ENCODE measurements at regions of chr2 and their contacts with region 1.

Region 1: GRCh38 chr2:37623971-37624900 is 47.2 kb downstream of the CDC42EP3 start:
- DNase-seq: no peak
- ATAC-seq: peak; percentile 70
- H3K4me3 ChIP-seq: no peak overlapping the region
- H3K4me3 Mint-ChIP-seq: peak overlapping the region in 9 of 10 donors; percentile 7 to 66 (median 51)
- H3K27ac ChIP-seq: no peak overlapping the region
- H3K27ac Mint-ChIP-seq: peak overlapping the region; percentile 38 to 92 (median 83)
- H3K4me1 ChIP-seq: peaks cover 30 to 56% of the 10 kb centered on the region in 2 donors
- H3K4me1 Mint-ChIP-seq: peaks cover 40 to 63% (median 45%) of the 10 kb centered on the region in 7 donors
- H3K27me3 ChIP-seq: no peaks in the 10 kb centered on the region
- H3K27me3 Mint-ChIP-seq: peaks cover 0 to 3% (median 0%) of the 10 kb centered on the region in 5 donors

Region 2: GRCh38 chr2:37635504-37636380 is 11.5 kb after region 1 on chr2:
- CTCF ChIA-PET with region 1: interaction called, 3 read pairs
- POLR2A ChIA-PET with region 1: interaction called, 4 read pairs
- intact Hi-C with region 1: loop called (anchors 1 kb)
- DNase-seq: peak; percentile 20 to 77 (median 39)
- ATAC-seq: peak; percentile 87
- H3K4me3 ChIP-seq: no peak overlapping the region
- H3K4me3 Mint-ChIP-seq: peak overlapping the region in 8 of 10 donors; percentile 13 to 49 (median 40)
- H3K27ac ChIP-seq: peak overlapping the region; percentile 41
- H3K27ac Mint-ChIP-seq: peak overlapping the region; percentile 5 to 84 (median 80)
- H3K4me1 ChIP-seq: peaks cover 24 to 58% of the 10 kb centered on the region in 2 donors
- H3K4me1 Mint-ChIP-seq: peaks cover 31 to 70% (median 36%) of the 10 kb centered on the region in 7 donors
- H3K27me3 ChIP-seq: no peaks in the 10 kb centered on the region
- H3K27me3 Mint-ChIP-seq: peaks cover 0 to 13% (median 0%) of the 10 kb centered on the region in 5 donors

Region 3: DNA sequence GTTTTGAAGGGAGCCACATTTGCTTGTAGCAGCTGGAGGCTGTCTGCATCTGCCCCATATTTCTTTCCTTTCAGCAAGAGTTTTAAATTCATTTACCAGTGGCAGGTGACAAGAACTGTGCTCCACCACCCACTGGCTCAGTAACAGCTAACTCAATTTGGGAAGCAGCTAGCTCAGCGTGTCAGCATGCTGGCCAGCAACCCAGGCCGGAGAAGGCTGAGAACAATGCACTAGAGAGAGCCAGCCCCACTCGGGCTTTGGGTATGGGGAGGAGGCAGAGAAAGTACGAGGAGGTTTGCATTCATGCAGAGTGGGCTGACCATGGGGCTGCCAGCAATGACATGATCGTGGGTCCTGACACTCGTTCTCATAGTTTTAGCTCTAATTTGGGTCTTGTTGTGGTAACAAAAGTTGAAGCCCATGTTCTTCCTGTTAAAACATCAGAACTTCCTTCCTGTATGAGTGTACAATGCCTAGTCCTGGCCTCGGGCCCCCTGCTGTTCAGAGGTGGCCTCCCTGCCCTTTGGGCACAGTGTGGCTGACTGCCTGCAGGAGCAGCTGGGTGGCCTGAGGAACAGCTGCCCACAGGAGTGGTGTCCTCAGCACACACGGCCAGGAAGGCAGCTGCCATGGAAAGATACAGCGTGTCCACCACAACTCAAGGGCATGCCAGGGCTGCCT is 24.2 kb after region 1 on chr2:
- CTCF ChIA-PET with region 1: interaction called, 3 read pairs
- POLR2A ChIA-PET with region 1: interaction called, 5 read pairs
- intact Hi-C with region 1: loop called in 1 of 2 experiments (anchors 2 kb)
- DNase-seq: no peak
- ATAC-seq: peak; percentile 88
- H3K4me3 ChIP-seq: peak overlapping the region; percentile 9
- H3K4me3 Mint-ChIP-seq: peak overlapping the region; percentile 17 to 79 (median 65)
- H3K27ac ChIP-seq: no peak overlapping the region
- H3K27ac Mint-ChIP-seq: peak overlapping the region; percentile 77 to 95 (median 90)
- H3K4me1 ChIP-seq: peaks cover 40 to 91% of the 10 kb centered on the region in 2 donors
- H3K4me1 Mint-ChIP-seq: peaks cover 62 to 95% (median 79%) of the 10 kb centered on the region in 7 donors
- H3K27me3 ChIP-seq: no peaks in the 10 kb centered on the region
- H3K27me3 Mint-ChIP-seq: no peaks in the 10 kb centered on the region